ENCODE measurements at regions of chr2 and their contacts with region 1.

Region 1: DNA sequence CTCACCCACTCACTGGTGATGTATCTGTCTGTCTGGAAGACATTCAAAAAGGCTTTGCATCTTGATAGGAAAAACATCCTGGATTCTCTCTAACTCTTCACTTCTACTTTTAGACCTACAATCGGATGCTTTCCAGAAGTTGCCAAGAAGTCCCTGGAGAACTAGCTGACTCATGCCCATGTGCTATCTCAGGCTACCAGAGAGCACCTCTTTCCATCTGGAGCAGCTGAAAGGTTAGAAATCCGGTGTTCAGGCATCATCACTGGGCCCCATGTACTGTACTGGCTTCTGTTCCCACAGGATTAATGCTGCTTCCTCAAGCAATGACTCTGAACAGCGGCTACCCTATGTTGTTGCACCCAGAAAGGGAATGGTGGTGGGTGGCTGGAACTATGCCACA is 259.0 kb downstream of the NBAS start:
- DNase-seq: no peak
- ATAC-seq: no peak
- H3K4me3 ChIP-seq: no peak overlapping the region
- H3K4me3 Mint-ChIP-seq: peak overlapping the region in 4 of 10 donors; percentile 29 to 73 (median 68)
- H3K27ac ChIP-seq: no peak overlapping the region
- H3K27ac Mint-ChIP-seq: peak overlapping the region in 6 of 9 donors; percentile 5 to 61 (median 34)
- H3K4me1 ChIP-seq: peaks cover 0 to 17% of the 10 kb centered on the region in 2 donors
- H3K4me1 Mint-ChIP-seq: peaks cover 27 to 60% (median 45%) of the 10 kb centered on the region in 7 donors
- H3K27me3 ChIP-seq: no peaks in the 10 kb centered on the region
- H3K27me3 Mint-ChIP-seq: no peaks in the 10 kb centered on the region

Region 2: DNA sequence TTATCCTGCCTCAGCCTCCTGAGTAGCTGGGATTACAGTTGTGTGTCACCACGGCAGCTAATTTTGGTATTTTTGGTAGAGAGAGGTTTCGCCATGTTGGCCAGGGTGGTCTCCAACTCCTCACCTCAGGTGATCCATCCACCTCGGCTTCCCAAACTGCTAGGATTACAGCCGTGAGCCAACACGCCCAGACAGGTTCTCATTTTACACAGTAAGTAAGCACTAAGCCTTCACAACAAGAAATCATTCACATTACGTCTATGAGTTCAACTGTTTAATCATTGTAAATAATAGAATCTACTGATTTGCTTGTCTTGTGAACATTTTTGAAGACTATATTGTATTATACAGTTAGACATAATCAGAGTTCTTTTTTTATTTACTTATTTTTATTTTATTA is 801.1 kb before region 1 on chr2:
- CTCF ChIA-PET with region 1: no interaction called
- POLR2A ChIA-PET with region 1: no interaction called
- intact Hi-C with region 1: no loop called
- DNase-seq: no peak
- ATAC-seq: no peak
- H3K4me3 ChIP-seq: no peak overlapping the region
- H3K4me3 Mint-ChIP-seq: no peak overlapping the region
- H3K27ac ChIP-seq: no peak overlapping the region
- H3K27ac Mint-ChIP-seq: no peak overlapping the region
- H3K4me1 ChIP-seq: no peaks in the 10 kb centered on the region
- H3K4me1 Mint-ChIP-seq: no peaks in the 10 kb centered on the region
- H3K27me3 ChIP-seq: no peaks in the 10 kb centered on the region
- H3K27me3 Mint-ChIP-seq: no peaks in the 10 kb centered on the region

Region 3: DNA sequence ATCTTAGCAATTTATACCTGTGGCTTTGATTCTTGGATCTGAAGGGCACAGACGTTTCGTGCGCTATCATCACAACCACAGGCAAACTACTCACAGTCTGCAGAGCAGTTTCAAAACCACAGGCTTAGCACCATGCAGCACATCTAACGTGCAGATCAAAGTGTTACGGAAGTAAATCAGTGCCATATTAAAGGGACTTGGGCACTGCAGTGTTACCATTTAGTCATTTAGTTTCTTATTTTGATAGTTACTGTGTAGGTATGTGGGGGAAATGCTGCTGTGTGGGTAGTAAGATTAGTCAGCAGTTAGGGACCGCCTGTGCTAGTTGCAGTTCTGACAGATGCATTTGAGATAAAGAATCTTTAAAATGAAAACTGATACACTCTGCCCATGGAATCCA is 125.1 kb before region 1 on chr2:
- CTCF ChIA-PET with region 1: no interaction called
- POLR2A ChIA-PET with region 1: no interaction called
- intact Hi-C with region 1: loop called in 1 of 2 experiments (anchors 1 kb)
- DNase-seq: peak in 8 of 9 donors; percentile 40 to 78 (median 62)
- ATAC-seq: peak; percentile 93
- H3K4me3 ChIP-seq: no peak overlapping the region
- H3K4me3 Mint-ChIP-seq: peak overlapping the region in 9 of 10 donors; percentile 8 to 53 (median 40)
- H3K27ac ChIP-seq: no peak overlapping the region
- H3K27ac Mint-ChIP-seq: peak overlapping the region; percentile 26 to 83 (median 54)
- H3K4me1 ChIP-seq: peaks cover 0 to 25% of the 10 kb centered on the region in 2 donors
- H3K4me1 Mint-ChIP-seq: peaks cover 19 to 46% (median 36%) of the 10 kb centered on the region in 7 donors
- H3K27me3 ChIP-seq: no peaks in the 10 kb centered on the region
- H3K27me3 Mint-ChIP-seq: no peaks in the 10 kb centered on the region

Region 4: GRCh38 chr2:15313657-15314056 is 11.5 kb after region 1 on chr2:
- CTCF ChIA-PET with region 1: no interaction called
- POLR2A ChIA-PET with region 1: no interaction called
- intact Hi-C with region 1: loop called in 1 of 2 experiments (anchors 2 kb)
- DNase-seq: no peak
- ATAC-seq: no peak
- H3K4me3 ChIP-seq: no peak overlapping the region
- H3K4me3 Mint-ChIP-seq: peak overlapping the region in 1 of 10 donors; percentile 20
- H3K27ac ChIP-seq: no peak overlapping the region
- H3K27ac Mint-ChIP-seq: peak overlapping the region in 1 of 9 donors; percentile 21
- H3K4me1 ChIP-seq: peaks cover 9 to 19% of the 10 kb centered on the region in 2 donors
- H3K4me1 Mint-ChIP-seq: peaks cover 16 to 74% (median 42%) of the 10 kb centered on the region in 7 donors
- H3K27me3 ChIP-seq: no peaks in the 10 kb centered on the region
- H3K27me3 Mint-ChIP-seq: no peaks in the 10 kb centered on the region

Region 5: GRCh38 chr2:15334650-15335326 is 32.6 kb after region 1 on chr2:
- CTCF ChIA-PET with region 1: no interaction called
- POLR2A ChIA-PET with region 1: no interaction called
- intact Hi-C with region 1: no loop called
- DNase-seq: no peak
- ATAC-seq: no peak
- H3K4me3 ChIP-seq: no peak overlapping the region
- H3K4me3 Mint-ChIP-seq: no peak overlapping the region
- H3K27ac ChIP-seq: no peak overlapping the region
- H3K27ac Mint-ChIP-seq: no peak overlapping the region
- H3K4me1 ChIP-seq: no peaks in the 10 kb centered on the region
- H3K4me1 Mint-ChIP-seq: peaks cover 5 to 15% (median 11%) of the 10 kb centered on the region in 7 donors
- H3K27me3 ChIP-seq: no peaks in the 10 kb centered on the region
- H3K27me3 Mint-ChIP-seq: no peaks in the 10 kb centered on the region

Region 6: GRCh38 chr2:15560988-15561573 is 258.9 kb after region 1 on chr2 and contains the start of gene NBAS:
- CTCF ChIA-PET with region 1: no interaction called
- POLR2A ChIA-PET with region 1: no interaction called
- intact Hi-C with region 1: loop called in 1 of 2 experiments (anchors 5 kb)
- DNase-seq: peak; percentile 50 to 79 (median 76)
- ATAC-seq: peak; percentile 93
- H3K4me3 ChIP-seq: peak within 1 kb of the TSS; percentile 61
- H3K4me3 Mint-ChIP-seq: peak within 1 kb of the TSS; percentile 88 to 100 (median 100)
- H3K27ac ChIP-seq: peak within 1 kb of the TSS; percentile 78
- H3K27ac Mint-ChIP-seq: peak within 1 kb of the TSS; percentile 93 to 99 (median 96)
- H3K4me1 ChIP-seq: peaks cover 4 to 17% of the 10 kb centered on the region in 2 donors
- H3K4me1 Mint-ChIP-seq: peaks cover 28 to 53% (median 45%) of the 10 kb centered on the region in 7 donors
- H3K27me3 ChIP-seq: no peaks in the 10 kb centered on the region
- H3K27me3 Mint-ChIP-seq: peaks cover 0 to 6% (median 0%) of the 10 kb centered on the region in 5 donors
- total RNA-seq, gene NBAS: 32.6 to 41.6 (median 36.4) TPM